ENCODE measurements at regions of chr22 and their contacts with region 1.

Region 1: DNA sequence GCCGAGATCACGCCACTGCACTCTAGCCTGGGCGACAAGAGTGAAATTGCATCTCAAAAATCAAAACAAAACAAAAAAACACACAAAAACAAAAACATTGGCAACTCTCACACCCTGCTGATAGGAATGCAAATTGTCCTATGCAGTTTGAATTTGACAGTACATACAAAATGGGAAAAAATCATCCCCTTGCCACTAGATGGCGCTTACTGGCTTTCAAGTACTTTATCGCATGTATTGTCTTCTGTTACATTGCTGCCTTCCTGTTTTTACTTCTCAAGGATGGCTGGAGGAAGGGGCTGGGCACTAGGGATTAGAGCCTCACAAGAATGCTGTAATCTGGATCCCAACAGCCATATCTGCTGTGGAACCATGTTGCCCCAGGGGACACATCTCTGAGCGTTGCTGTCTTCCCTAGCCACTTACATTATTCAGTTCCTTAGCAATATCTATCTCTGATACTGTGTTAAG is 59.4 kb upstream of the A4GALT start:
- DNase-seq: no peak
- H3K4me3 ChIP-seq: no peak overlapping the region
- H3K27ac ChIP-seq: no peak overlapping the region
- H3K4me1 ChIP-seq: peaks cover 0 to 3% (median 0%) of the 10 kb centered on the region in 4 donors
- H3K27me3 ChIP-seq: no peaks in the 10 kb centered on the region
- CTCF ChIP-seq: peak; percentile 84 to 96 (median 94)
- EP300 ChIP-seq: no peak
- POLR2A ChIP-seq: no peak

Region 2: DNA sequence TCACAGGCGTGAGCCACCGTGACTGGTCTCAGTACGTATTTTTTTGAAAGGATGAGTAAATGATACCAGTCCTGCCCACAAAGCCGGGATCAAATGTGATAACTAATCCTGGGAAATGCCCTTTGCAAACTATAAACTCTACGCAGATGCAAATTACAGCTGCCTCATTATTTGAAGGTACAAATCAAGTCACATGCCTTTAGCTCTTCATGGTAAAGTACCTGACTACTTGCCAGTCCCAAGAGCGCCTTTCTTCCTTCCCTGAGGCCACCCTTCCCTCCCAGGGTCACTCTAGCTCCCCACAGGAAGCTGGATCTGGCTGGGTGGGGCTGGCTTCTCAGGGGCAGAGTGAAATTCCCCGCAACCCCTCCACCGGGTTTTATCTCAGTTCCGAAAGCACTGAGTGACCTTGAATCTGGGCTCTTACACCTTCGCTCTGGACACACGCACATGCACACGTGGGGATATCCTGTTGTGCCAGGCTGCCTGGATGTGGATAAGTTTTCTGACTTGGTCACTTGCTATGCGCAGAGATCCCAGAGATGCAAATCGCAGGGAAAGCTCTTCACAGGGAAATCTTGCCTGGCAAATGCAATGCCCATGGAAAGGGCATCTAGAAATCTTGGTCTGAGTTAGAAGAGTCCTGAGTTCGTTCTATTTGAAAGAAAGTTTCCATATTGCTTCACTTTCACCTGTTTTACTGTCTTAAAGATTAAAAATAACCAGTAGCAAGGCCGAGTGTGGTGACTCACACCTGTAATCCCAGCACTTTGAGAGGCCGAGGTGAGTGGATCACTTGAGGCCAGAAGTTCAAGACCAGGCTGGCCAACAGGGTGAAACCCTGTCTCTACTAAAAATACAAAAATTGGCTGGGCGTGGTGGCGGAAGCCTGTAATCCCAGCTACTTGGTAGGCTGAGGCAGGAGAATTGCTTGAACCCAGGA is 67.9 kb before region 1 on chr22:
- intact Hi-C with region 1: no loop called
- DNase-seq: no peak
- H3K4me3 ChIP-seq: no peak overlapping the region
- H3K27ac ChIP-seq: peak overlapping the region; percentile 34 to 56 (median 44)
- H3K4me1 ChIP-seq: peaks cover 0 to 35% (median 27%) of the 10 kb centered on the region in 4 donors
- H3K27me3 ChIP-seq: no peaks in the 10 kb centered on the region
- CTCF ChIP-seq: no peak
- EP300 ChIP-seq: no peak
- POLR2A ChIP-seq: no peak

Region 3: DNA sequence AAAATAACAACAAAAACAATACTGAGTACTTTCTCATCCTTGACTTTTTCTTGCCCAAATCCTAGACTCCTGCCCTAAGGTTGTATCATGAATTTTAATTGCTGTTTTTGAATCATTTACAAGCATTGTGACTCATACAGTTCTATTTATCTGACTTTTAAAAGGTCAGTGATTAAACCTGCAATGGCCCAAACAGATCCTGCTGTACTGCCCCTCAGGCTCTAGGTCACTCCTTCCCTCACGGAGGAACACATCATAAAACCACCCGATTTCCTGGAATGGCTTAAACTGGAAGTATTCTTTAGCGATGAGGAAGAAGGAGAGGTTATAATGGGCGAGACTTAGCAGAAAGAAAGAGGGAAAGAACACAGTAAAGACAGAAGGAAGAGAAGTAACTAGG is 64.7 kb after region 1 on chr22:
- intact Hi-C with region 1: loop called (anchors 10 kb)
- DNase-seq: no peak
- H3K4me3 ChIP-seq: no peak overlapping the region
- H3K27ac ChIP-seq: no peak overlapping the region
- H3K4me1 ChIP-seq: peaks cover 0 to 13% (median 13%) of the 10 kb centered on the region in 4 donors
- H3K27me3 ChIP-seq: no peaks in the 10 kb centered on the region
- CTCF ChIP-seq: no peak
- EP300 ChIP-seq: no peak
- POLR2A ChIP-seq: no peak

Region 4: GRCh38 chr22:42880815-42881214 is 100.7 kb after region 1 on chr22:
- intact Hi-C with region 1: no loop called
- DNase-seq: no peak
- H3K4me3 ChIP-seq: no peak overlapping the region
- H3K27ac ChIP-seq: no peak overlapping the region
- H3K4me1 ChIP-seq: peaks cover 0 to 6% (median 2%) of the 10 kb centered on the region in 4 donors
- H3K27me3 ChIP-seq: no peaks in the 10 kb centered on the region
- CTCF ChIP-seq: no peak
- EP300 ChIP-seq: no peak
- POLR2A ChIP-seq: no peak

Region 5: DNA sequence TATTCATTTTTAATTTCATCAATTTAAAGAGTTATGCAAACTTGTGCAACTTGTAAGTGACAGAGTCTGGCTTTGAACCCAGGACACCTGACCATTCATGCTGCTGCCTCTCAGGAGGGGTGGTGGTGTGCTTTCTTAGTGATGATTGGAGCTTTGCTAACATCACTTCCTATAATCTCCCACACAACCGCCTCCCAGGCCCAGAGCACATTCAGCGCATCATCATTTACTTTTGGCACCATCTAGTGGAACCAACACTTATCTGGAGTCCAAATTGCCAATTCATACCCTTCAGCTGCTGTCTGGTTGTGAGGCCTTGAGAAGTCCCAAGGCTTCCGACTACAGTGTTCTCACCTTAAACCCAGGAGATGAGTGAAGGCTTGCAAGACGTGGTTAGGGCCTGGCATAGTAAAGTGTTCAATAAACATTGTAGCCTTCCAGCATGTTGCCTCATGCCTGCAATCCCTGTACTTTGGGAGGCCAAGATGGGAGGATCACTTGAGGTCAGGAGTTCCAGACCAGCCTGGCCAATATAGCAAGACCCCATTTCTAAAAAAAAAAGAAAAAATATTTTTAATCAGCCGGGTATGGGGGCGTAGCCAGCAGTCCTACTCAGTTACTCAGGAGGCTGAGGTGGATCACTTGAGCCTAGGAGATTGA is 310.2 kb after region 1 on chr22:
- intact Hi-C with region 1: loop called (anchors 5 kb)
- DNase-seq: peak; percentile 72
- H3K4me3 ChIP-seq: no peak overlapping the region
- H3K27ac ChIP-seq: peak overlapping the region in 2 of 4 donors; percentile 68 to 77
- H3K4me1 ChIP-seq: peaks cover 0 to 12% (median 9%) of the 10 kb centered on the region in 4 donors
- H3K27me3 ChIP-seq: no peaks in the 10 kb centered on the region
- CTCF ChIP-seq: no peak
- EP300 ChIP-seq: no peak
- POLR2A ChIP-seq: no peak